ENCODE measurements at regions of chr11 and their contacts with region 1.

Region 1: GRCh38 chr11:133834682-133835592 is 10.4 kb downstream of the SPATA19 start:
- DNase-seq: peak; percentile 79
- H3K4me3 ChIP-seq: no peak overlapping the region; a peak in 1 of 4 replicates
- H3K27ac ChIP-seq: no peak overlapping the region
- H3K4me1 ChIP-seq: no peaks in the 10 kb centered on the region
- H3K27me3 ChIP-seq: no peaks in the 10 kb centered on the region
- CTCF ChIP-seq: peak; percentile 34; the same call in 1 of the 2 replicates
- EP300 ChIP-seq: no peak
- RAD21 ChIP-seq: peak; percentile 89

Region 2: GRCh38 chr11:133776671-133777367 is 58.1 kb before region 1 on chr11:
- CTCF ChIA-PET with region 1: no interaction called
- POLR2A ChIA-PET with region 1: no interaction called
- DNase-seq: no peak
- H3K4me3 ChIP-seq: no peak overlapping the region
- H3K27ac ChIP-seq: no peak overlapping the region
- H3K4me1 ChIP-seq: no peaks in the 10 kb centered on the region
- H3K27me3 ChIP-seq: no peaks in the 10 kb centered on the region
- CTCF ChIP-seq: no peak
- EP300 ChIP-seq: no peak
- RAD21 ChIP-seq: no peak

Region 3: DNA sequence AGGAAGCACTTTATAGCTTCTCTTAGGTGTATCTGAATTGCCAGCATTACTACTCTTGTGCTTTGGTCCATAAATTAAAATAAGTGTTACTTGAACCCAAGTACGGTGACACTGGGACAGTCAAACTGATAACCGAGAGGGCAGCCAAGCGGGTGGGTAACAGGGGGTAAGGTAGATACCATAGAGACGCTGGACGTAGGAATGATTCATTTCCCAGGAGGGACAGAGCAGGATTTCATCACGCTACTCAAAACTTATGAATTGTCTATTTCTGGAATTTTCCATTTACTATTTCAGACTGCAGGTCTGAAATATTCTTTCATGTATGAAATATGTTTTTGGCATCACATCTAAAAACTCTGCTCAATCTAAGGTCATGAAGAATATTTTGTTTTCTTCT is 25.2 kb after region 1 on chr11:
- CTCF ChIA-PET with region 1: interaction called, 12 read pairs
- POLR2A ChIA-PET with region 1: no interaction called
- DNase-seq: no peak
- H3K4me3 ChIP-seq: no peak overlapping the region
- H3K27ac ChIP-seq: no peak overlapping the region
- H3K4me1 ChIP-seq: no peaks in the 10 kb centered on the region
- H3K27me3 ChIP-seq: no peaks in the 10 kb centered on the region
- CTCF ChIP-seq: no peak
- EP300 ChIP-seq: no peak
- RAD21 ChIP-seq: no peak